ENCODE measurements at regions of chr4 and their contacts with region 1.

Region 1: GRCh38 chr4:67545199-67546003 is at the start of gene CENPC:
- DNase-seq: peak; percentile 81 to 96 (median 91)
- ATAC-seq: peak; percentile 85
- H3K4me3 ChIP-seq: peak within 1 kb of the TSS; percentile 87 to 93
- H3K4me3 Mint-ChIP-seq: peak within 1 kb of the TSS; percentile 97
- H3K27ac ChIP-seq: peak within 1 kb of the TSS; percentile 96 to 98
- H3K27ac Mint-ChIP-seq: peak within 1 kb of the TSS; percentile 100
- H3K4me1 ChIP-seq: peaks cover 3% of the 10 kb centered on the region
- H3K4me1 Mint-ChIP-seq: peaks cover 47% of the 10 kb centered on the region
- H3K27me3 ChIP-seq: no peaks in the 10 kb centered on the region
- H3K27me3 Mint-ChIP-seq: no peaks in the 10 kb centered on the region
- CTCF ChIP-seq: no peak
- total RNA-seq, gene CENPC: 134 to 143 TPM

Region 2: GRCh38 chr4:67531379-67531962 is 13.9 kb before region 1 on chr4:
- CTCF ChIA-PET with region 1: no interaction called
- POLR2A ChIA-PET with region 1: interaction called, 4 read pairs
- intact Hi-C with region 1: loop called in 1 of 2 experiments (anchors 2 kb)
- DNase-seq: no peak
- ATAC-seq: no peak
- H3K4me3 ChIP-seq: no peak overlapping the region
- H3K4me3 Mint-ChIP-seq: no peak overlapping the region
- H3K27ac ChIP-seq: no peak overlapping the region
- H3K27ac Mint-ChIP-seq: no peak overlapping the region
- H3K4me1 ChIP-seq: peaks cover 6% of the 10 kb centered on the region
- H3K4me1 Mint-ChIP-seq: peaks cover 52% of the 10 kb centered on the region
- H3K27me3 ChIP-seq: no peaks in the 10 kb centered on the region
- H3K27me3 Mint-ChIP-seq: no peaks in the 10 kb centered on the region
- CTCF ChIP-seq: no peak

Region 3: GRCh38 chr4:67624939-67625338 is 79.5 kb after region 1 on chr4:
- CTCF ChIA-PET with region 1: interaction called, 7 read pairs
- POLR2A ChIA-PET with region 1: interaction called, 4 read pairs
- intact Hi-C with region 1: loop called (anchors 2 to 5 kb)
- DNase-seq: no peak
- ATAC-seq: no peak
- H3K4me3 ChIP-seq: no peak overlapping the region
- H3K4me3 Mint-ChIP-seq: no peak overlapping the region
- H3K27ac ChIP-seq: no peak overlapping the region
- H3K27ac Mint-ChIP-seq: no peak overlapping the region
- H3K4me1 ChIP-seq: no peaks in the 10 kb centered on the region
- H3K4me1 Mint-ChIP-seq: no peaks in the 10 kb centered on the region
- H3K27me3 ChIP-seq: no peaks in the 10 kb centered on the region
- H3K27me3 Mint-ChIP-seq: no peaks in the 10 kb centered on the region
- CTCF ChIP-seq: no peak

Region 4: DNA sequence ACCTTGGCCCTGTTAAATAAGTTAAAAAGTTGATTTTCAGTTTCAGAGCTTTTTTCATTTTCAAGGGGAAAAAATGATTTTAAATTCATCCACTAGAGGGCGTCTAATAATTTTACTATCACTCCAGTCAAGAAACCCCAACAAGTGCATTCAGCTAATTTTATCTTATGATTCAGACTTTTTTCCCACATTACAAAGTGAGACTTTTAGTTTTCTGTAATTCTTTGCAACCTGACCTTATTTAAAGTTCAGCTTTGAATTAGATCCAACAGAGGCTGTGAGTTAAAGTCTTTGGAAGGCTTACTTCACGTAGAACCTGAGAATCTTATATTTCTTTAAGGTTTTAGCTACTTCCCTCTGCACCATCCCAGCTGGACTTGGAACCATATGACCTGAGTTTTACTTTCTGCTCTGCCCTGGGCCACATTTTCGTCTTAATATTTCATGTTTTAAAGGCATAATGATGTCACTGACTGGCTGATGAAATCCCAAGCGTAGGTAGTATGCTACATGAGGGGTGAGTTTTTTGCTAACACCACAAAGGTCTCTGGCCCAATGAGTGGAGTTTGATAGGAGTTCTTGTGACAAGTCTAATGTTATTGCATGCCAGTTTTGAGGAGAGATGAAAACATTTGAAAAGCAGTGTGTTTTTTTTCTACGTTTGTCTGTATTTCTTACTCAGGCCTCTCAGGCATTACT is 201.5 kb after region 1 on chr4:
- CTCF ChIA-PET with region 1: no interaction called
- POLR2A ChIA-PET with region 1: no interaction called
- intact Hi-C with region 1: loop called (anchors 1 to 2 kb)
- DNase-seq: peak in 2 of 9 experiments; percentile 41 to 51
- ATAC-seq: no peak
- H3K4me3 ChIP-seq: no peak overlapping the region
- H3K4me3 Mint-ChIP-seq: no peak overlapping the region
- H3K27ac ChIP-seq: no peak overlapping the region
- H3K27ac Mint-ChIP-seq: no peak overlapping the region
- H3K4me1 ChIP-seq: no peaks in the 10 kb centered on the region
- H3K4me1 Mint-ChIP-seq: no peaks in the 10 kb centered on the region
- H3K27me3 ChIP-seq: no peaks in the 10 kb centered on the region
- H3K27me3 Mint-ChIP-seq: no peaks in the 10 kb centered on the region
- CTCF ChIP-seq: peak; percentile 87

Region 5: GRCh38 chr4:68175562-68176155 is 630.3 kb after region 1 on chr4:
- CTCF ChIA-PET with region 1: no interaction called
- POLR2A ChIA-PET with region 1: no interaction called
- intact Hi-C with region 1: loop called in 1 of 2 experiments (anchors 5 kb)
- DNase-seq: peak in 3 of 9 experiments; percentile 14 to 50 (median 40)
- ATAC-seq: peak; percentile 48
- H3K4me3 ChIP-seq: no peak overlapping the region
- H3K4me3 Mint-ChIP-seq: no peak overlapping the region
- H3K27ac ChIP-seq: no peak overlapping the region
- H3K27ac Mint-ChIP-seq: no peak overlapping the region
- H3K4me1 ChIP-seq: no peaks in the 10 kb centered on the region
- H3K4me1 Mint-ChIP-seq: peaks cover 2% of the 10 kb centered on the region
- H3K27me3 ChIP-seq: no peaks in the 10 kb centered on the region
- H3K27me3 Mint-ChIP-seq: peaks cover 5% of the 10 kb centered on the region
- CTCF ChIP-seq: peak; percentile 54

Measured in CD8-positive, alpha-beta T cell (primary cell).